ENCODE measurements at regions of chr4 and their contacts with region 1.

Region 1: GRCh38 chr4:6250235-6250983 is 19.2 kb upstream of the WFS1 start:
- DNase-seq: no peak
- H3K4me3 Mint-ChIP-seq: no peak overlapping the region
- H3K27ac Mint-ChIP-seq: no peak overlapping the region
- H3K4me1 Mint-ChIP-seq: peaks cover 5% of the 10 kb centered on the region
- H3K27me3 Mint-ChIP-seq: peaks cover 39% of the 10 kb centered on the region

Region 2: GRCh38 chr4:5998333-5998936 is 252.0 kb before region 1 on chr4:
- CTCF ChIA-PET with region 1: interaction called, 20 read pairs
- POLR2A ChIA-PET with region 1: no interaction called
- DNase-seq: peak; percentile 59
- H3K4me3 Mint-ChIP-seq: no peak overlapping the region
- H3K27ac Mint-ChIP-seq: no peak overlapping the region
- H3K4me1 Mint-ChIP-seq: peaks cover 21% of the 10 kb centered on the region
- H3K27me3 Mint-ChIP-seq: peaks cover 5% of the 10 kb centered on the region

Region 3: DNA sequence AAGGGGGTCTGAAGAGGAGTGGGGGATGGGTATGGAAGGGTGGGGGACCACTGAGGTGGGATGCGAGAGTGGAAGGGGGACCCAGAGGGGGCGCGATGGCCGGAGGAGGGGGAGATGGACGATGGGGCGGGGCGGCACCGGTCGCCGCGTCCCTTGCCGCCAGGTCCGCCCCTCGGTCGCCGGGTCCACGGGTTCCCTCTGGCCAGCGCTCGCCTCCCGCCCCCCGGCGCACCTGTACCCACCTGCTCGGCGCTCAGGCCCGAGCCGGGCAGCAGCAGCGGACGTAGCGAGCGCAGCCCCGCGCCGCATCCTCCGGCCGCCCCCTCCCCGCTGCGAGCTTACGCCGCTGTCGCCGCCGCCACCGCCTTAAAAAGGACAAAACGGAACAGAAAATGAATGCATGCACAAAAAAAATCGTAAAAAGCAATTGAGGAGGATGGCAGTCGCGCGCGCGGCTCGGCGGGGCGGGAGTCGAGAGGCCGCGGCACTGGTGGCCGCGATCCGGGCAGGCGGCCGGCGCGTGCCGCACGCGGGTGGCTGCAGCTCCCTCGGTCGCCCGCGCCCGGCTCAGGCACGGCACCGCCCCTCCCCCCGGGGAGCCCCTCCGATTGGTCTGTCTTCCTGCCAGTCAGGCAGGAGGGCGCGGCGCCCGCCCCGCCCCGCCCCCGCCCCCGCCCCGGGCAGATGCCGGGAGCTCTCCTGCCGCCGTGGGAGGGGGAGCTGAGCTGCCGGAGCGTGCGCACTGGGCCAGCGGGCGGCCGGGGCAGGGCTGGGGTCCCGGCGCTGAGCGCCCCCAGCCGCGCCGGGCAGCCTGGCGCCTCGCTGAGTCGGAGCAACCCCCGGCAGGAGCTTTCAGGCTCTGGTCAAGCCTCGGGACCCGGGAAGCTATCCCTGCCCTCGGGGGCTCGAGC is 50.1 kb before region 1 on chr4 and contains the start of gene JAKMIP1:
- CTCF ChIA-PET with region 1: interaction called, 20 read pairs
- POLR2A ChIA-PET with region 1: interaction called, 15 read pairs
- DNase-seq: peak; percentile 93
- H3K4me3 Mint-ChIP-seq: peak within 1 kb of the TSS; percentile 92
- H3K27ac Mint-ChIP-seq: peak within 1 kb of the TSS; percentile 95
- H3K4me1 Mint-ChIP-seq: peaks cover 50% of the 10 kb centered on the region
- H3K27me3 Mint-ChIP-seq: no peaks in the 10 kb centered on the region
- total RNA-seq, gene JAKMIP1: 43.8 to 44.4 TPM

Region 4: DNA sequence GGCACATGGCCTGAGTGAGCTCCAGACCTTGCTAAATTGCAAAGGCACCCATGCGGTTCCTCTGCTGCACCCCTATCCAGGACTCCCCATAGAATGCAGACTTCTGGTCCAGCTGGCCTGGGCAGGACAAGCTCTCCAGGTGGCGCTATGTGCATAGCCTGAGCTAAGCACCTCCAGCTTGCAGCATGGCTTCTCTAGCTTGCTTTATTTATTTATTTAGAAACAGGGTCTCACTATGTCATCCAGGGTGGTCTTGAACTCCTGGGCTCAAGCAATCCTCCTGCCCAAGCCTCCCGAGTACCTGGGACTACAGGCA is 13.8 kb after region 1 on chr4:
- CTCF ChIA-PET with region 1: interaction called, 46 read pairs
- POLR2A ChIA-PET with region 1: interaction called, 3 read pairs
- DNase-seq: peak; percentile 42
- H3K4me3 Mint-ChIP-seq: no peak overlapping the region
- H3K27ac Mint-ChIP-seq: no peak overlapping the region
- H3K4me1 Mint-ChIP-seq: peaks cover 18% of the 10 kb centered on the region
- H3K27me3 Mint-ChIP-seq: peaks cover 39% of the 10 kb centered on the region

Region 5: GRCh38 chr4:6308899-6309643 is 58.7 kb after region 1 on chr4:
- CTCF ChIA-PET with region 1: interaction called, 13 read pairs
- POLR2A ChIA-PET with region 1: no interaction called
- DNase-seq: no peak
- H3K4me3 Mint-ChIP-seq: no peak overlapping the region
- H3K27ac Mint-ChIP-seq: no peak overlapping the region
- H3K4me1 Mint-ChIP-seq: peaks cover 1% of the 10 kb centered on the region
- H3K27me3 Mint-ChIP-seq: peaks cover 70% of the 10 kb centered on the region

Region 6: GRCh38 chr4:6333301-6334202 is 83.1 kb after region 1 on chr4:
- CTCF ChIA-PET with region 1: interaction called, 341 read pairs
- POLR2A ChIA-PET with region 1: interaction called, 6 read pairs
- DNase-seq: peak; percentile 45
- H3K4me3 Mint-ChIP-seq: no peak overlapping the region
- H3K27ac Mint-ChIP-seq: no peak overlapping the region
- H3K4me1 Mint-ChIP-seq: peaks cover 18% of the 10 kb centered on the region
- H3K27me3 Mint-ChIP-seq: peaks cover 23% of the 10 kb centered on the region

Measured in activated CD4-positive, alpha-beta memory T cell treated with anti-CD3 and anti-CD28 coated beads, Interleukin-2, amount 10 ng/mL, durations not matched to agents 7 days and 5 days (primary cell).